Mucosa of descending colon (tissue), 3 donors: ENCODE measurements at regions of chr21 and their contacts with region 1.

Region 1: DNA sequence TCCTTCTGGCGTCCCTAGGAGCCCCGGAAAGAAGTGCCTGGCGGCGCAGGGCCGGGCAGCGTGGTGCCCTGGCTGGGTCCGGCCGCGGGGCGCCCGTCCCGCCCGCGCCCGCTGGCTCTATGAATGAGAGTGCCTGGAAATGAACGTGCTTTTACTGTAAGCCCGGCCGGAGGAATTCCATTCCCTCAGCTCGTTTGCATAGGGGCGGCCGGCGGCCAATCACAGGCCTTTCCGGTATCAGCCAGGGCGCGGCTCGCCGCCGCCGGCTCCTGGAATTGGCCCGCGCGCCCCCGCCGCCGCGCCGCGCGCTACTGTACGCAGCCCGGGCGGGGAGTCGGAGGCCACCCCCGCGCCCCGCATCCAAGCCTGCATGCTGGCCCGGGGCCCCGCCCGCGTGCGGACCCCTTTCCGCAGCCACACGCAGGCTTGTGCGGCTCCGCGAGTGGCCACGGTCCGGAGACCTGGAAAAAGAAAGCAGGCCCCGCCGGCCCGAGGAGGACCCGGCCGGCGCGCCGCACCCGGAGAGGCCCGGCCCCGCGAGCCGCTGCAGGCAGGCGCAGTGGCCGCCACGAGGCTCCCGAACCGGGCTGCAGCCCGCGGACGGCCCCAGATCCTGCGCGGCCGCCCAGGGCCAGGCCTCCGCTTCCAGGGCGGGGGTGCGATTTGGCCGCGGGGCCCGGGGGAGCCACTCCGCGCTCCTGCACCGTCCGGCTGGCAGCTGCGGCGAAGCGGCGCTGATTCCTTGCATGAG is 160.4 kb downstream of the RUNX1 start:
- DNase-seq: peak; percentile 95 to 96 (median 95)
- ATAC-seq: peak; percentile 72
- H3K4me3 ChIP-seq: peak overlapping the region; percentile 38
- H3K4me1 ChIP-seq: peaks cover 7% of the 10 kb centered on the region
- CTCF ChIP-seq: no peak

Region 2: GRCh38 chr21:34630536-34631143 is 258.1 kb before region 1 on chr21:
- intact Hi-C with region 1: no loop called
- DNase-seq: peak in 1 of 3 donors; percentile 52
- ATAC-seq: peak; percentile 72
- H3K4me3 ChIP-seq: no peak overlapping the region
- H3K4me1 ChIP-seq: no peaks in the 10 kb centered on the region
- CTCF ChIP-seq: peak; percentile 45

Region 3: DNA sequence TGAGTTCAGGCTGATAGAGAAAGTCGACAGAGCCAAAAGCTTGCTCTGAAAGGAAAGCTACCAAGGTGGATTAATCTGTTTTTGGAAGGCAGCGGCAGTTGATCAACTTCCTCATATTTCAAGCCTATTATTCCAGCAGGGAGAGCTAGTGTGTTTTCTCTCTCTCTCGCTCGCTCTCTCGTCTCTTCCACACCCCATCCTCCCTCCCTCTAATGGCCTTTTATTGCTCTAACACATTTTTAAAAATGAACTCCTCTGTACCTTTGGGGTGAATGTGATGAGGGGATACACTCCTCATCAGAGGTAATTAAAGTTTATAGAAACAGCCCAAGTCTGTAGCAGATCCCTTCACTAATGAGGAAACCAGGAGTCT is 93.6 kb before region 1 on chr21:
- intact Hi-C with region 1: loop called in 1 of 2 experiments (anchors 10 kb)
- DNase-seq: peak in 1 of 3 donors; percentile 55
- ATAC-seq: peak; percentile 70
- H3K4me3 ChIP-seq: no peak overlapping the region
- H3K4me1 ChIP-seq: peaks cover 29% of the 10 kb centered on the region
- CTCF ChIP-seq: no peak

Region 4: DNA sequence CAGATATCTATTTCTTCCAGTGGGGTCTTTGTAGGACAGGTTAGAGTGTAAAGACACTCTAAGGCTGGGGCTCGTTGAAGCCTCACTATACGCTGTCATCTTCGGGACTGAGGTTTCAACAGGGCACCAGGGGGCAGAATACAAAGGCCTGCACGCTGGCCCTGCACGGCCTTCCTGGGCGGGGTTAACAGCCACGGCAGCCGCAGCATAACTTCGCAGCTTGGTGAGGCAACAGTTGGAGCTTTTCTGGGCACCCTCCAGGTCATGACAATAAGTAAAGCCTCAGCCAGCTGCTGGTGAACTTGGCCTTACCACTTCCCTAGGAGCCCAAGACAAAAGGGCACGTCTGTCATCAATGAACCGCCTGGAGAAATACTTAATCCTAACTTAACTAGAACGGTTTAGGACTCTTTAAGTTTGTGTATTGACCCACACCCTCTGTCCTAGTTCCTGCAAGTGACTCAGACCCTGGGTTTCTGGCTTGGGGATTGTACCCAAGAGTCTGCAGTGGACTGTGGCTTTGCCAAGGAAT is 162.6 kb after region 1 on chr21:
- intact Hi-C with region 1: loop called in 1 of 2 experiments (anchors 10 kb)
- DNase-seq: peak; percentile 87 to 92 (median 89)
- ATAC-seq: peak; percentile 86
- H3K4me3 ChIP-seq: no peak overlapping the region
- H3K4me1 ChIP-seq: peaks cover 21% of the 10 kb centered on the region
- CTCF ChIP-seq: peak; percentile 49

Region 5: GRCh38 chr21:35400233-35400957 is 511.7 kb after region 1 on chr21:
- intact Hi-C with region 1: loop called (anchors 5 kb)
- DNase-seq: peak in 1 of 3 donors; percentile 61
- ATAC-seq: peak; percentile 88
- H3K4me3 ChIP-seq: no peak overlapping the region
- H3K4me1 ChIP-seq: no peaks in the 10 kb centered on the region
- CTCF ChIP-seq: no peak